ENCODE measurements at regions of chr1 and their contacts with region 1.

Region 1: GRCh38 chr1:109773146-109773899 is 9.6 kb upstream of the EPS8L3 start:
- DNase-seq: peak; percentile 76 to 82
- H3K4me3 ChIP-seq: no peak overlapping the region
- H3K4me3 Mint-ChIP-seq: no peak overlapping the region
- H3K27ac Mint-ChIP-seq: no peak overlapping the region
- H3K4me1 ChIP-seq: no peaks in the 10 kb centered on the region; the same call in 1 of the 2 replicates
- H3K4me1 Mint-ChIP-seq: no peaks in the 10 kb centered on the region
- H3K27me3 ChIP-seq: no peaks in the 10 kb centered on the region
- H3K27me3 Mint-ChIP-seq: no peaks in the 10 kb centered on the region
- CTCF ChIP-seq: peak; percentile 48 to 75

Region 2: GRCh38 chr1:109548321-109549267 is 224.7 kb before region 1 on chr1 and contains the start of gene GNAI3:
- CTCF ChIA-PET with region 1: interaction called, 4 read pairs
- POLR2A ChIA-PET with region 1: no interaction called
- intact Hi-C with region 1: loop called (anchors 1 kb)
- DNase-seq: peak; percentile 89 to 92
- H3K4me3 ChIP-seq: peak within 1 kb of the TSS; percentile 94
- H3K4me3 Mint-ChIP-seq: peak within 1 kb of the TSS; percentile 97
- H3K27ac Mint-ChIP-seq: peak within 1 kb of the TSS; percentile 99
- H3K4me1 ChIP-seq: peaks cover 12% of the 10 kb centered on the region
- H3K4me1 Mint-ChIP-seq: peaks cover 9% of the 10 kb centered on the region
- H3K27me3 ChIP-seq: no peaks in the 10 kb centered on the region
- H3K27me3 Mint-ChIP-seq: peaks cover 3% of the 10 kb centered on the region
- CTCF ChIP-seq: no peak
- total RNA-seq, gene GNAI3: 6.2 and 6.4 TPM in 2 replicates

Region 3: DNA sequence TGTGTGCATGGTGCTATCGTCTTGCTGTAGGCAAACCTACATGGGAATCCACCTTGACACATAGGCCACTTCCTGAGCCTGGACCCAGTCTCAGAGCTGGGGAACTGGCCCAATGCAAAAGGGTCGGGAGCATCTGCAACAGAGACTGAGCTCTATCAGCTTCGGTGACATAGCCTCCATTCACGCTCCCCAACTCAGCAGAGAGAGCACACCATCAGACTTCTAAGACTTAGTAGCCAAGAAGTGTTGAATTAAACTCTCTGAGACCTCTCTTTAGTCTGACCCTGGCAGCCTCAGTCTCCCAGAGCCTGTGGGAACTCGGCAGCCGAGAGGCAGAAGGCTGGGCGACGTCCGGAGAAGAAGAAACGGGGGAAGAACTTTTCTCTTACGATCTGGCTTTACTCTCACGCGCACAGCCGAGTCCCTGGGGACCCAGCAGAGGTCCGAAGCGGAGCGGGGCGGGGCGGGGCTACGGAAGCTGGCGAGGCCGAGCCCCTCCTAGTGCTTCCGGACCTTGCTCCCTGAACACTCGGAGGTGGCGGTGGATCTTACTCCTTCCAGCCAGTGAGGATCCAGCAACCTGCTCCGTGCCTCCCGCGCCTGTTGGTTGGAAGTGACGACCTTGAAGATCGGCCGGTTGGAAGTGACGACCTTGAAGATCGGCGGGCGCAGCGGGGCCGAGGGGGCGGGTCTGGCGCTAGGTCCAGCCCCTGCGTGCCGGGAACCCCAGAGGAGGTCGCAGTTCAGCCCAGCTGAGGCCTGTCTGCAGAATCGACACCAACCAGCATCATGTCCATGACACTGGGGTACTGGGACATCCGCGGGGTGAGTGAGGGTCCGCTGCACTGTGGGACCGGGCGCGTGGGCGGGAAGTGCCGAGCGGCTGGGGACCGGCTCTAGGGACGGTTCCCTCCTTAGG is 117.5 kb before region 1 on chr1 and contains the start of gene GSTM4:
- CTCF ChIA-PET with region 1: interaction called, 6 read pairs
- POLR2A ChIA-PET with region 1: no interaction called
- intact Hi-C with region 1: loop called (anchors 5 kb)
- DNase-seq: peak; percentile 77 to 84
- H3K4me3 ChIP-seq: peak within 1 kb of the TSS; percentile 48
- H3K4me3 Mint-ChIP-seq: peak within 1 kb of the TSS; percentile 80
- H3K27ac Mint-ChIP-seq: peak within 1 kb of the TSS; percentile 76
- H3K4me1 ChIP-seq: no peaks in the 10 kb centered on the region
- H3K4me1 Mint-ChIP-seq: peaks cover 18% of the 10 kb centered on the region
- H3K27me3 ChIP-seq: no peaks in the 10 kb centered on the region
- H3K27me3 Mint-ChIP-seq: no peaks in the 10 kb centered on the region
- CTCF ChIP-seq: no peak
- total RNA-seq, gene GSTM4: 9.6 and 11.9 TPM in 2 replicates

Region 4: DNA sequence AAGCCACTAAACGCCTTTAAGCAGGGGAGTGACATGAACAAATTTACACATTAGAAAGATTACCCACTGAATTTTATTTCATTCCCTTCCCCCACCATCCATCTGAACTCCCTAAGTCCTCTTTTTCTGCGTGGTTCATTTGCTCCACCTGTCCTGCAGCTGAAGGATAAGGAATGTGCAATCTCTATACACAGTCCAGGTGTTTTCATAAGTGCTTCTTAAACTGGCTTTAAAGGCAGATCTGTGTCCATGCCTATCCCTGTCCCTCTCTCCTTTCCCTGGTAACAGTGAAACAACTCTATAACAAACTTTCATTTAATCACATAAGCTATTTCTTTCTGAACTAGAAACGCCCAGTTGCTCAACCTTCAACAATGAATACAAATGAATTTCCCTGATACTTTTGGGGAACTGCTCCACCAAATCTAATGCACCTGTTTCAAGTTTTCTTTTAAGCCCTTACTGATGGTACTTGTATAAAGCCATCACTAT is 40.9 kb before region 1 on chr1:
- CTCF ChIA-PET with region 1: no interaction called
- POLR2A ChIA-PET with region 1: no interaction called
- intact Hi-C with region 1: loop called (anchors 5 kb)
- DNase-seq: no peak
- H3K4me3 ChIP-seq: peak overlapping the region; percentile 41
- H3K4me3 Mint-ChIP-seq: peak overlapping the region; percentile 87
- H3K27ac Mint-ChIP-seq: peak overlapping the region; percentile 80
- H3K4me1 ChIP-seq: peaks cover 34% of the 10 kb centered on the region
- H3K4me1 Mint-ChIP-seq: peaks cover 15% of the 10 kb centered on the region
- H3K27me3 ChIP-seq: no peaks in the 10 kb centered on the region
- H3K27me3 Mint-ChIP-seq: no peaks in the 10 kb centered on the region
- CTCF ChIP-seq: no peak

Region 5: DNA sequence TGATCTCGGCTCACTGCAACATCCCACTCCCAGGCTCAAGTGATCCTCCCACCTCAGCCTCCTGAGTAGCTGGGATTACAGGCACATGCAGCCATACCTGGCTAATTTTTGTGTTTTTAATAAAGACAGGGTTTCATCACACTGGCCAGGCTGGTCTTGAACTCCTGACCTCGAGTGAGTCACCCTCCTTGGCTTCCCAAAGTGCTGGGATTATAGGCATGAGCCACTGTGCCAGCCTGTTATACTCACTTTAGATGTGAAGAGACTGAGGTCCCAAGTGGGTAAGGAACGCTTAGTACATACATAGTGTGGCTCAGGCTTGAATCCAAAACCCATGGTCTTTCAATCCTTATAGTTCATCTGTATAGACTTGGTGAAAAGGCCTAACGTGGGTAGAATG is 54.1 kb after region 1 on chr1:
- CTCF ChIA-PET with region 1: no interaction called
- POLR2A ChIA-PET with region 1: no interaction called
- intact Hi-C with region 1: no loop called
- DNase-seq: no peak
- H3K4me3 ChIP-seq: no peak overlapping the region
- H3K4me3 Mint-ChIP-seq: no peak overlapping the region
- H3K27ac Mint-ChIP-seq: no peak overlapping the region
- H3K4me1 ChIP-seq: peaks cover 10% of the 10 kb centered on the region
- H3K4me1 Mint-ChIP-seq: peaks cover 19% of the 10 kb centered on the region
- H3K27me3 ChIP-seq: no peaks in the 10 kb centered on the region
- H3K27me3 Mint-ChIP-seq: no peaks in the 10 kb centered on the region
- CTCF ChIP-seq: no peak

Region 6: DNA sequence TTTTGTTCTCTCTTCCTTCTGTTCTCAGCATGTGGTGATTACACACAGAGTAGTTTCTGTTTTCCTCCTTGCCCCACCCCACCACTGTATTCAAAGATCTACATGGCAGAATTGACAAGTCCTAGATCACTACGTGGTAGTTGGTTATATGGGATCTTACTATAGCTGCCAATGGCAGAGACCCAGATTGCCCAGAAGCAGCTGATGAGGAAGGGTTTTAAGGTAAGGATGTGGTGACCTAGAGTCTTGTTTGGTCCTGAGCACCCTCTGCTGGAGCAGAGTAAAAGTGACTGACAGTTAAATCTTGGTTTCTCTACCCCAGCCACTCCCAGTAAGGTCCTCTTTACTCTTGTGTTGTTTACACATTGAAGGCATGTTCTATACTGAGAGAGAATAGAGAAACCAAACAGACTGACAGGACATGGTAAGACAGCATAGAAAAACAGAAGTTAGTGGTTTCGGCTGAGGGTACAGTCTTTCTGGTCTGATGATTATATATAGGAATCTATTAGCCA is 238.3 kb after region 1 on chr1:
- CTCF ChIA-PET with region 1: interaction called, 10 read pairs
- POLR2A ChIA-PET with region 1: no interaction called
- intact Hi-C with region 1: loop called (anchors 2 kb)
- DNase-seq: peak; percentile 35 to 41
- H3K4me3 ChIP-seq: no peak overlapping the region
- H3K4me3 Mint-ChIP-seq: no peak overlapping the region
- H3K27ac Mint-ChIP-seq: no peak overlapping the region
- H3K4me1 ChIP-seq: no peaks in the 10 kb centered on the region
- H3K4me1 Mint-ChIP-seq: no peaks in the 10 kb centered on the region
- H3K27me3 ChIP-seq: no peaks in the 10 kb centered on the region
- H3K27me3 Mint-ChIP-seq: no peaks in the 10 kb centered on the region
- CTCF ChIP-seq: peak; percentile 46 to 50

Measured in Caco-2 (cell line).